MCF 10A (cell line): ENCODE measurements at regions of chr6 and their contacts with region 1.

Region 1: GRCh38 chr6:34791701-34792235 is at the start of gene BLTP3A:
- DNase-seq: peak; percentile 56
- H3K4me3 Mint-ChIP-seq: peak within 1 kb of the TSS; percentile 97
- H3K27ac Mint-ChIP-seq: peak within 1 kb of the TSS; percentile 99
- H3K4me1 Mint-ChIP-seq: peaks cover 15% of the 10 kb centered on the region
- H3K27me3 Mint-ChIP-seq: no peaks in the 10 kb centered on the region
- CTCF ChIP-seq: no peak
- total RNA-seq, gene BLTP3A: 18.5 and 25.4 TPM in 2 replicates

Region 2: GRCh38 chr6:34656378-34657036 is 135.3 kb before region 1 on chr6:
- CTCF ChIA-PET with region 1: no interaction called
- POLR2A ChIA-PET with region 1: interaction called, 18 read pairs
- intact Hi-C with region 1: no loop called
- DNase-seq: peak; percentile 41
- H3K4me3 Mint-ChIP-seq: peak overlapping the region; percentile 75
- H3K27ac Mint-ChIP-seq: peak overlapping the region; percentile 89
- H3K4me1 Mint-ChIP-seq: peaks cover 19% of the 10 kb centered on the region
- H3K27me3 Mint-ChIP-seq: no peaks in the 10 kb centered on the region
- CTCF ChIP-seq: no peak

Region 3: DNA sequence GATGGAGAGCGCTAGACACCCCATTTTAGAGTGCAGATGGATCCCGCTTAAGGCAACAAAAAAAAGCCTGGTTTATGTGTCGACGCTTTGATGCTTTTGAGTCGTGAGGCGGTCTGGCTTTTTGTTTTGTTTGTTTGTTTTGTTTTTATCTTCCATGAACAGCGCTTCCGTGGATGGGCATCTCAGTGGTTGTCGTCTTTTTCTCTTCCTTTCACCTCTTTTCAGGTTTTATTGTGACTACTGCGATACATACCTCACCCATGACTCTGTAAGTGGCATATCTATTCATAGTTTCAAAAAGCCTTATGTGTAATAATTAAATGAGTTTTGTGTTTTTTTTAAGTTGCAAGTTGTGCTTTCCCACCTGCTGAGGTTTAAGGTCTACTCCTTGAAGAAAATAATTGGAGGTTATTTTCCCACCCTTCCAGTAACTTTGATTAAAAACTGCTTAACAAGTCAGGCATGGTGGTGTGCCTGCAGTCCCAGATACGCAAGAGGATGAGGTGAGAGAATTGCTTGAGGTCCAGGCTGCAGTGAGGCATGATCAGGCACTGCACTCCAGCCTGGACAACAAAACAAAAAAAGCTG is 34.0 kb before region 1 on chr6:
- CTCF ChIA-PET with region 1: interaction called, 4 read pairs
- POLR2A ChIA-PET with region 1: interaction called, 25 read pairs
- intact Hi-C with region 1: loop called (anchors 2 kb)
- DNase-seq: no peak
- H3K4me3 Mint-ChIP-seq: no peak overlapping the region
- H3K27ac Mint-ChIP-seq: no peak overlapping the region
- H3K4me1 Mint-ChIP-seq: peaks cover 6% of the 10 kb centered on the region
- H3K27me3 Mint-ChIP-seq: no peaks in the 10 kb centered on the region
- CTCF ChIP-seq: no peak

Region 4: DNA sequence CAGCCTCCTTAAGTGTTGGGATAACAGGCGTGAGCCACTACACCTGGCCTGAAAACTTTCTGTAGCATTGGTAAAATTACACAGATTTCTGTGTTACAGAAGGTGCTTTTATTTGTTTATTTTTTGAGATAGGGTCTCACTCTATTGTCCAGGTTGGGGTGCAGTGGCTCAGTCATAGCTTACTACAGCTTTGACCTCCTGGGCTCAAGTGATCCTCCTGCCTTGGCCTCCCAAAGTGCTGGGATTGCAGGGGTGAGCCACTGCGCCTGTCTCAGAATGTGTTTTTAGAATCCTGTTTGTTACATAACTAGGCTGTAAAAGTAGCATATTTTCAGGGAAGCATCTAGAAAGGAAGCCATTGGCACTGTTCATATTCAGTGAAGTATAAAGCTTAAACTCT is 16.8 kb before region 1 on chr6:
- CTCF ChIA-PET with region 1: interaction called, 6 read pairs
- POLR2A ChIA-PET with region 1: interaction called, 15 read pairs
- intact Hi-C with region 1: no loop called
- DNase-seq: no peak
- H3K4me3 Mint-ChIP-seq: no peak overlapping the region
- H3K27ac Mint-ChIP-seq: no peak overlapping the region
- H3K4me1 Mint-ChIP-seq: no peaks in the 10 kb centered on the region
- H3K27me3 Mint-ChIP-seq: no peaks in the 10 kb centered on the region
- CTCF ChIP-seq: no peak

Region 5: GRCh38 chr6:34810936-34811632 is 19.3 kb after region 1 on chr6:
- CTCF ChIA-PET with region 1: interaction called, 5 read pairs
- POLR2A ChIA-PET with region 1: interaction called, 50 read pairs
- intact Hi-C with region 1: no loop called
- DNase-seq: peak; percentile 67
- H3K4me3 Mint-ChIP-seq: no peak overlapping the region
- H3K27ac Mint-ChIP-seq: peak overlapping the region; percentile 71
- H3K4me1 Mint-ChIP-seq: peaks cover 15% of the 10 kb centered on the region
- H3K27me3 Mint-ChIP-seq: no peaks in the 10 kb centered on the region
- CTCF ChIP-seq: no peak

Region 6: DNA sequence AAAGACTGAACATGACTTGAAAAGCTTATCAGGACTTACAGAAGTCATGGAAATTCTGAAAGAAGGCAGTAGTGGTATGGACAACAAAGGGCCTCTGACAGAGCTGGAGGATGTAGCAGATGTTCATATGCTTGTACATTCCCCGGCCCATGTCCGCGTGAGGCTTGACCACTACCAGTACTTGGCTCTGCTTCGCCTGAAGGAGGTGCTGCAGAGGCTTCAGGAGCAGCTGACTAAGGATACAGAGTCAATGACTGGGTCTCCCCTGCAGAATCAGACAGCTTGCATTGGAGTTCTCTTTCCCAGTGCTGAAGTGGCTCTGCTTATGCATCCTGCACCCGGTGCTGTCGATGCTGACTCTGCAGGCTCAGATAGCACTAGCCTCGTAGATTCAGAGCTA is 66.9 kb after region 1 on chr6:
- CTCF ChIA-PET with region 1: no interaction called
- POLR2A ChIA-PET with region 1: no interaction called
- intact Hi-C with region 1: no loop called
- DNase-seq: no peak
- H3K4me3 Mint-ChIP-seq: no peak overlapping the region
- H3K27ac Mint-ChIP-seq: no peak overlapping the region
- H3K4me1 Mint-ChIP-seq: no peaks in the 10 kb centered on the region
- H3K27me3 Mint-ChIP-seq: no peaks in the 10 kb centered on the region
- CTCF ChIP-seq: peak; percentile 10